Right lobe of liver (tissue), 6 donors: ENCODE measurements at regions of chr1 and their contacts with region 1.

Region 1: DNA sequence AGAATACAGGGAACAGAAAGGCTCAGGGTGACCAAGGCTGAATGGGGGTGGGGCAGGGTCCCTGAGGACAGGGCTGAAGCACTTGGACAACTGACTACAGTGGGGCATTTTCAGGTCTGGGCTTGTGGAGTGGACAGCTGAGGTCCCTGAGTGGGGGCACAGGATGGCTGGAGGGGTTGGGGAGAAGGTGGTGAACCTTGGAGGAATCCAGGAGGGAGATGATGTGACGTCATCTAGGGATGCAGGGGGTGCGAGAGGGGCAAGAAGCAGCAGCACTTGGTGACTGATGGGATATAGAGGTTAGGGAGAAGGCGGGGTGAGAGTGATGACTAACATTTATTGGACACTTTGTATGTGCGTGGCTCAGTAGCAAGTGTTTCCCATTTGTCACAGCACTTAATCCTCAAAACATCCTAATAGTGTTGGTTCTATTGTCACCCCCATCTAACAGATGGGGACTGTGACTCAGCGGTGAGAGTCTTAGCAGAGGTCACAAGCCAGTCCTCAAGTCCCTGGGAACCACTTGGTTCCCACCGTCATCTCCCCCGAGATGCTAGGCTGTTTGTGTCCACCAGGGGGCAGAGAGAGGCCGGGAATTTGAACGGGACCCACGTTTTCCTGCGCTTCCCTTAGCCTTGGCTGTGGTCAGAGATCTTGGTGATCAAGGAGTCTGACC is 27.9 kb upstream of the BMP8B start:
- DNase-seq: peak; percentile 38 to 76 (median 64)
- ATAC-seq: peak; percentile 87 to 96 (median 91)
- H3K4me3 ChIP-seq: no peak overlapping the region
- H3K27ac ChIP-seq: no peak overlapping the region
- H3K4me1 ChIP-seq: no peaks in the 10 kb centered on the region
- H3K27me3 ChIP-seq: no peaks in the 10 kb centered on the region
- CTCF ChIP-seq: peak; percentile 65 to 95 (median 72)
- POLR2A ChIP-seq: no peak

Region 2: DNA sequence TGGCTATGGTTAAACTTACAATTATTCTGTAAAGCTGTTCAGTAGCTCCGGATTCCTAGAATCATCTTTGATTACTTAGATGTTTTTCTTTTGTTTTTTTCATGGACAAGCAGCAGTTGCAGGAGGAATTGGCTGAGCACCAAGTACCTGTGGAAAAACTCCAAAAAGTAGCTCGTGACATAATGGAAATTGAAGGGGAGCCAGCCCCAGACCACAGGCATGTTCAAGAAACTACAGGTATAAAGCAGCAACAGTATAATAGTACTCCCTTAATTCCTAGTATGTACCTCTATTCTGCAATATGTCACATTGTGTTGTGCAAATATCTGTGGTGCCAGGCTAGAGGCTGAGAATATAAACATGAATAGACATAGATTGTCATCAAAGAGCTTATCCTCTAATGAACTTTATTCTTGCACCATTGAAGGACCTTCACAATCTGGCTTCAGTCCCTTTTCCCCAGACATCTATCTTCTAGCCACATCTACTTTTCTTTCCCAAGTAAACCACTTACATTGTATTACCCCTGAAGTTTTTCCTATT is 457.5 kb before region 1 on chr1:
- intact Hi-C with region 1: no loop called
- DNase-seq: no peak
- ATAC-seq: peak in 1 of 4 donors; percentile 54
- H3K4me3 ChIP-seq: no peak overlapping the region
- H3K27ac ChIP-seq: peak overlapping the region in 1 of 3 donors; percentile 1
- H3K4me1 ChIP-seq: peaks cover 0 to 8% (median 0%) of the 10 kb centered on the region in 4 donors
- H3K27me3 ChIP-seq: no peaks in the 10 kb centered on the region
- CTCF ChIP-seq: no peak
- POLR2A ChIP-seq: no peak

Region 3: GRCh38 chr1:39901698-39902459 is 85.3 kb after region 1 on chr1 and contains the start of gene MYCL:
- intact Hi-C with region 1: loop called (anchors 5 kb)
- DNase-seq: peak; percentile 88 to 94 (median 93)
- ATAC-seq: peak; percentile 81 to 90 (median 84)
- H3K4me3 ChIP-seq: peak within 1 kb of the TSS; percentile 70 to 75 (median 70)
- H3K27ac ChIP-seq: peak within 1 kb of the TSS; percentile 51 to 89 (median 72)
- H3K4me1 ChIP-seq: peaks cover 0 to 20% (median 7%) of the 10 kb centered on the region in 4 donors
- H3K27me3 ChIP-seq: no peaks in the 10 kb centered on the region
- CTCF ChIP-seq: peak; percentile 74 to 91 (median 81)
- POLR2A ChIP-seq: peak; percentile 85
- total RNA-seq, gene MYCL: 0.75 to 20.5 (median 6.1) TPM

Region 4: GRCh38 chr1:39973503-39974135 is 157.1 kb after region 1 on chr1:
- intact Hi-C with region 1: loop called in 1 of 2 experiments (anchors 5 kb)
- DNase-seq: peak; percentile 81 to 86 (median 82)
- ATAC-seq: peak; percentile 84 to 91 (median 87)
- H3K4me3 ChIP-seq: no peak overlapping the region
- H3K27ac ChIP-seq: no peak overlapping the region
- H3K4me1 ChIP-seq: peaks cover 0 to 3% (median 0%) of the 10 kb centered on the region in 4 donors
- H3K27me3 ChIP-seq: no peaks in the 10 kb centered on the region
- CTCF ChIP-seq: peak; percentile 94 to 97 (median 96)
- POLR2A ChIP-seq: no peak

Region 5: DNA sequence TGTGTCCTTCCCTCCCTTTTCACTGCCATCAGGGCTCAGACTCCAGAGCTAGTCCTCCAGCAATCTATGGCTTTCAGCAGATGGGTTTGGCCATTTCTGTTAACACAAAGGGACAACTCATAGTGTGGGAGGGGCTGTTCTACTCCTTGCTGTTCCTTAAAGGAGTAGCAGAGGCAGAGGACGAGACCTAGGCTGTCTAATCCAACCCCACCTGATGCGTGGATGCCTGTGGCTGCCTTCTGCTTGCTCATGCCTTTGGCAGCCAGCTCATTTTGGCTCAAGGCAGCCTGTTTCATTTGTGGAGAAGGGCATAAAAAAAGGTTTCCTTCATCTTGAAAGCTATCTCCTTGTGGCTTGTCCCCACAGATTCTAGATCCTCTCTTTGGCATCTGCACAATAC is 165.4 kb after region 1 on chr1:
- intact Hi-C with region 1: loop called (anchors 5 to 10 kb)
- DNase-seq: peak in 1 of 3 donors; percentile 20
- ATAC-seq: no peak
- H3K4me3 ChIP-seq: no peak overlapping the region
- H3K27ac ChIP-seq: no peak overlapping the region
- H3K4me1 ChIP-seq: no peaks in the 10 kb centered on the region
- H3K27me3 ChIP-seq: no peaks in the 10 kb centered on the region
- CTCF ChIP-seq: no peak
- POLR2A ChIP-seq: no peak

Region 6: GRCh38 chr1:40039757-40040510 is 223.4 kb after region 1 on chr1:
- intact Hi-C with region 1: loop called in 1 of 2 experiments (anchors 10 kb)
- DNase-seq: peak; percentile 84 to 90 (median 85)
- ATAC-seq: peak; percentile 54 to 71 (median 64)
- H3K4me3 ChIP-seq: peak overlapping the region; percentile 90 to 100 (median 96)
- H3K27ac ChIP-seq: peak overlapping the region; percentile 89 to 97 (median 97)
- H3K4me1 ChIP-seq: peaks cover 0 to 22% (median 5%) of the 10 kb centered on the region in 4 donors
- H3K27me3 ChIP-seq: no peaks in the 10 kb centered on the region
- CTCF ChIP-seq: no peak
- POLR2A ChIP-seq: peak; percentile 97